CD8-positive, alpha-beta T cell (primary cell): ENCODE measurements at regions of chrX and their contacts with region 1.

Region 1: GRCh38 chrX:13734278-13735172 is at the starts of genes OFD1 and TRAPPC2:
- DNase-seq: peak; percentile 75 to 95 (median 90)
- ATAC-seq: peak; percentile 84
- H3K4me3 ChIP-seq: peak within 1 kb of the TSS; percentile 62 to 92
- H3K4me3 Mint-ChIP-seq: peak within 1 kb of the TSS; percentile 97
- H3K27ac ChIP-seq: peak within 1 kb of the TSS; percentile 93 to 99
- H3K27ac Mint-ChIP-seq: peak within 1 kb of the TSS; percentile 99
- H3K4me1 ChIP-seq: peaks cover 46% of the 10 kb centered on the region
- H3K4me1 Mint-ChIP-seq: peaks cover 54% of the 10 kb centered on the region
- H3K27me3 ChIP-seq: no peaks in the 10 kb centered on the region
- H3K27me3 Mint-ChIP-seq: no peaks in the 10 kb centered on the region
- CTCF ChIP-seq: no peak
- total RNA-seq, gene OFD1: 49.2 to 56.7 TPM
- total RNA-seq, gene TRAPPC2: 20.5 to 24.6 TPM

Region 2: DNA sequence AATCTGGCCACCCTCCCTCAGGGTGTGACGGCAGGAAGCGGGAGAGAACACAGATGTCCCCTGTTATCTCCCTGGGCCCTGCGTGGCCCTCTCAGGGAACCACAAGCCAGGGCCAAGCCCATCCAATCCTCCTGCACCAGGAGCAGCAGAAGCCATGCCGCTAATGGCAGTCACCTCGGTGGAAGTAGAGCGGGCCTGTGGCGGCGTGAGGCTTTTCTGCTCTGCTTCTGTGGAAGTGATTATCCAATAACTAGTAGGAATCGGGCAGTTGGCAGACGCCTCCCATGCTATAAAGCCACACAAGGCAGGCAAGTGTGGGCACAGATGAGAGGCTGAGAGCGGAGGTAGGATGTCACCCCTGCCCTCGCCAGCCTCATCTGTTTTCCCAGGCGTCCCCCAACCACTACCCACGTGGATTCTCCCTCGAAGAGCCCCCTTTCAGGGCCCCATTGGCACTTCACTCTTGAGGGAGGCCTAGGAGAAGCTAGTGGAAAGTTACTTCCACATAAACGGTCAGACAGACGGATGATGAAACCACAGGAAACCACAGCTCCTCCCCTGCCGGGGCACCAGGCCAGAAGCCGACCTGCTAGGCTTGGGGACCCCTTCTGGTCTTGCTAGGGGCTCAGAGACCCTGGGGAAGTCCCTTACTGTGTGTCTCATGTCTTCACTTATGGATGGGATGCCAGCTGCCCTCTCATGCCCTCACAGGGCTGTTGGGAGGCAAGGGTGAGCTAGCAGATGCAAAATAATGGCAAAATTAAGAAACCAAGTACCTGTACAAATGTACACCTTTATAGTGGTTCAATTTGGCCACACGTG is 778.4 kb before region 1 on chrX:
- CTCF ChIA-PET with region 1: no interaction called
- POLR2A ChIA-PET with region 1: no interaction called
- intact Hi-C with region 1: loop called (anchors 5 kb)
- DNase-seq: peak in 8 of 9 experiments; percentile 50 to 83 (median 68)
- ATAC-seq: peak; percentile 22
- H3K4me3 ChIP-seq: peak overlapping the region; percentile 34 to 43
- H3K4me3 Mint-ChIP-seq: peak overlapping the region; percentile 79
- H3K27ac ChIP-seq: peak overlapping the region; percentile 62 to 89
- H3K27ac Mint-ChIP-seq: peak overlapping the region; percentile 99
- H3K4me1 ChIP-seq: peaks cover 79% of the 10 kb centered on the region
- H3K4me1 Mint-ChIP-seq: peaks cover 74% of the 10 kb centered on the region
- H3K27me3 ChIP-seq: no peaks in the 10 kb centered on the region
- H3K27me3 Mint-ChIP-seq: no peaks in the 10 kb centered on the region
- CTCF ChIP-seq: no peak

Region 3: DNA sequence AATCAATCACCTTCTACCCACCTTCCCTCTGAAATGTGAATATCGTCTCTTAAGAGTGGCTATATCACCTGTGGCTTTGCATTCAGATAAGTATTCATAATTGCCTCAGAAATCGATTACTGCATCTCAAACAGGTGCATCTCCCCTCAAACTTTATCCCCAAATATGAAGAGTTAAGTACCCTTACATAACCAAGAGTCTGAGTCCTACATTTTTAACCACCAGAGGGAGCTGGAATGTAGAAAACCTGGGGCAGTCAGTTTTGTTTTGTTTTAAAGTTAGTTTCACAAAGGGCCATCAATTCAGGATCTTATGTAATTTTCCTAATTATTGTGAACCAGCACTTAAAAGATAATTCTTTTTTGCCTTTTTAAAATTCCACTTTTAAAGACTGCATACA is 75.9 kb before region 1 on chrX:
- CTCF ChIA-PET with region 1: interaction called, 4 read pairs
- POLR2A ChIA-PET with region 1: interaction called, 7 read pairs
- intact Hi-C with region 1: loop called (anchors 1 to 5 kb)
- DNase-seq: peak in 3 of 9 experiments; percentile 23 to 77 (median 63)
- ATAC-seq: peak; percentile 44
- H3K4me3 ChIP-seq: no peak overlapping the region
- H3K4me3 Mint-ChIP-seq: peak overlapping the region; percentile 18
- H3K27ac ChIP-seq: peak overlapping the region in 1 of 2 experiments; percentile 56
- H3K27ac Mint-ChIP-seq: peak overlapping the region; percentile 79
- H3K4me1 ChIP-seq: peaks cover 10% of the 10 kb centered on the region
- H3K4me1 Mint-ChIP-seq: peaks cover 30% of the 10 kb centered on the region
- H3K27me3 ChIP-seq: no peaks in the 10 kb centered on the region
- H3K27me3 Mint-ChIP-seq: no peaks in the 10 kb centered on the region
- CTCF ChIP-seq: peak; percentile 48

Region 4: GRCh38 chrX:13721819-13722519 is 12.6 kb before region 1 on chrX:
- CTCF ChIA-PET with region 1: interaction called, 3 read pairs
- POLR2A ChIA-PET with region 1: interaction called, 21 read pairs
- intact Hi-C with region 1: loop called in 1 of 2 experiments (anchors 2 kb)
- DNase-seq: no peak
- ATAC-seq: no peak
- H3K4me3 ChIP-seq: no peak overlapping the region
- H3K4me3 Mint-ChIP-seq: no peak overlapping the region
- H3K27ac ChIP-seq: no peak overlapping the region
- H3K27ac Mint-ChIP-seq: peak overlapping the region; percentile 68
- H3K4me1 ChIP-seq: peaks cover 36% of the 10 kb centered on the region
- H3K4me1 Mint-ChIP-seq: peaks cover 71% of the 10 kb centered on the region
- H3K27me3 ChIP-seq: no peaks in the 10 kb centered on the region
- H3K27me3 Mint-ChIP-seq: no peaks in the 10 kb centered on the region
- CTCF ChIP-seq: no peak

Region 5: GRCh38 chrX:14872851-14873675 is 1138.5 kb after region 1 on chrX and contains the starts of genes FANCB and MOSPD2:
- CTCF ChIA-PET with region 1: no interaction called
- POLR2A ChIA-PET with region 1: no interaction called
- intact Hi-C with region 1: loop called in 1 of 2 experiments (anchors 2 kb)
- DNase-seq: peak; percentile 85 to 97 (median 92)
- ATAC-seq: peak; percentile 89
- H3K4me3 ChIP-seq: peak within 1 kb of the TSS; percentile 81 to 83
- H3K4me3 Mint-ChIP-seq: peak within 1 kb of the TSS; percentile 84
- H3K27ac ChIP-seq: peak within 1 kb of the TSS; percentile 79 to 86
- H3K27ac Mint-ChIP-seq: peak within 1 kb of the TSS; percentile 92
- H3K4me1 ChIP-seq: peaks cover 9% of the 10 kb centered on the region
- H3K4me1 Mint-ChIP-seq: peaks cover 21% of the 10 kb centered on the region
- H3K27me3 ChIP-seq: no peaks in the 10 kb centered on the region
- H3K27me3 Mint-ChIP-seq: no peaks in the 10 kb centered on the region
- CTCF ChIP-seq: no peak
- total RNA-seq, gene FANCB: 2.5 to 3.1 TPM
- total RNA-seq, gene MOSPD2: 4.2 to 4.6 TPM